A549 (cell line): ENCODE measurements at regions of chr15 and their contacts with region 1.

Region 1: GRCh38 chr15:89057504-89058133 is 30.6 kb upstream of the ABHD2 start:
- DNase-seq: peak; percentile 80 to 91
- ATAC-seq: peak; percentile 93 to 97
- H3K4me3 ChIP-seq: no peak overlapping the region
- H3K27ac ChIP-seq: peak overlapping the region; percentile 55 to 57; a peak in 5 of 6 replicates
- H3K4me1 ChIP-seq: peaks cover 6% of the 10 kb centered on the region; the same call in 1 of the 3 replicates
- CTCF ChIP-seq: peak; percentile 100
- EP300 ChIP-seq: no peak
- POLR2A ChIP-seq: no peak
- RAD21 ChIP-seq: peak; percentile 100

Region 2: DNA sequence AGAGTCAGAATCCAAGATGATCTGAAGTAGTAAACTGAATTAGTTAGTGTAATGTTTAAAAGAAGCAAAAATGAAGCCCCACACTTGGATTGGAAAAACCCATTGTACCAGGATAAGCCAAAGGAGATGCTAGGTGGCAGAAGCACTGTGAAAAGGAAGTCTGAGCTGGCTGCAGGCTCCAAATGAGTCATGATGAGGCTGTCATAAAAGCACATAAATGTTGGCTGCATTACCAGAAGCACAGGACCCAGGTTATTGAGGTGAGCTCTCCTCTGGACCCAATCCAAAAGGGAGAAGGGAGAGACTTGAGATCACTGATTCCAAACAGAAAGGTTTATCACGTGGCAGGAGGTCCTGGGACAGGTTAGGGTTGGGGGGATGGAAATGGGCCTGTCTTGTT is 257.6 kb before region 1 on chr15:
- CTCF ChIA-PET with region 1: no interaction called
- POLR2A ChIA-PET with region 1: no interaction called
- DNase-seq: peak in 1 of 2 experiments; percentile 36
- ATAC-seq: peak; percentile 34 to 45; a peak in 2 of 6 replicates
- H3K4me3 ChIP-seq: no peak overlapping the region
- H3K27ac ChIP-seq: no peak overlapping the region
- H3K4me1 ChIP-seq: peaks cover 7% of the 10 kb centered on the region; the same call in 1 of the 3 replicates
- CTCF ChIP-seq: no peak
- EP300 ChIP-seq: no peak
- POLR2A ChIP-seq: no peak
- RAD21 ChIP-seq: no peak

Region 3: DNA sequence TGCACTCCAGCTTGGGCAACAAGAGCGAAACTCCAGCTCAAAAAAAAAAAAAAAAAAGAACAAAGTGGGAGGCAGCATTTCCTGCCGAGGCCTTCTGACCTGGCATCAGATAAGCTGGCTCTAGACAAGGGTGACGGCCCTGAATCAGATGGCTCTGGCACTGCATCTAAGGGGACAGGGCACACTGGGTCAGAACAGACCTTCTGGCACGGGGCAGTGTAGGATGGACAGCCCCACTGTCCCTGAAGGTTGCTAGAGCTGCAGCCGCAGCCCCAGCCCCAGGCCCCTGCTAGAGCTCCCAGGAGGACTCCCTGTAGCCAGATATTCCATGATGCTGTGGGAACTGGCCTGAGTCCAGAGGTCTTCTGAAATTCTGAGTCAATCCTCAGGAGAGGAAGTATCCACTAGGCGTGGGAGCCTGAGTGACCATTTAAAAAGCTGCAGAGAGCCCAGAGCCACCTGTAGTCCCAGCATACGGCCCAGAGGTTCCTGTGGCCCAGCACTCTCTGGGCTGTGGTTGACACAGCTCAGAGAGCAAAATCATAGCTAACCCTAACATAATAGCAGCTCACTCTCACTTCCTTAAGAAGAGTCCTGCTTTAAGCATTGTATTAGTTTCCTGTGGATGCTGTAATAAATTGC is 75.2 kb before region 1 on chr15:
- CTCF ChIA-PET with region 1: interaction called, 11 read pairs
- POLR2A ChIA-PET with region 1: no interaction called
- DNase-seq: peak; percentile 72 to 86
- ATAC-seq: peak; percentile 78 to 89
- H3K4me3 ChIP-seq: no peak overlapping the region
- H3K27ac ChIP-seq: peak overlapping the region; percentile 87 to 89
- H3K4me1 ChIP-seq: peaks cover 57% of the 10 kb centered on the region
- CTCF ChIP-seq: no peak
- EP300 ChIP-seq: peak in 1 of 2 experiments; percentile 28; a peak in 2 of 5 replicates
- POLR2A ChIP-seq: no peak; the same call in none of the 2 replicates
- RAD21 ChIP-seq: no peak; a peak in 2 of 5 replicates

Region 4: DNA sequence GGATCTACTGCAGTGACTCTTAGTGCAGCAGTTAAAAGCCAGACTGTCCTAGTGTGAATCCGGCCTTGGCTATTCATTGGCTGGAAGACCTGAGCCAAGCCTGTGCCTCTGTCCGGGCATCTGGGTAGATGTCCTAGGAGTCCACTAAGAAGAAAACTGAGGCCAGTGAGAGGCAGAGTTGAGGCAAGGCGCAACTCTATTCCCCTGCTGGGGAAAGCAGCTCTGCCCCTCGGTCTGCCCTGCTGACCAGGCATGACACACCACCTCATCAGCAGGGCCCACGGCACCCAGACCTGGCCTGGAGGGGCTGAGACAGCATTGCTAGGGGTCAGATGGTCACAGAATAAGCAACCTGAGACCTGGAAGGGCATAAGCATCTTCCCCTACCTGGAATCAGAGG is 16.1 kb before region 1 on chr15:
- CTCF ChIA-PET with region 1: interaction called, 31 read pairs
- POLR2A ChIA-PET with region 1: no interaction called
- DNase-seq: no peak
- ATAC-seq: peak; percentile 39 to 53; a peak in 3 of 6 replicates
- H3K4me3 ChIP-seq: no peak overlapping the region
- H3K27ac ChIP-seq: no peak overlapping the region
- H3K4me1 ChIP-seq: no peaks in the 10 kb centered on the region
- CTCF ChIP-seq: no peak
- EP300 ChIP-seq: no peak
- POLR2A ChIP-seq: no peak
- RAD21 ChIP-seq: no peak

Region 5: DNA sequence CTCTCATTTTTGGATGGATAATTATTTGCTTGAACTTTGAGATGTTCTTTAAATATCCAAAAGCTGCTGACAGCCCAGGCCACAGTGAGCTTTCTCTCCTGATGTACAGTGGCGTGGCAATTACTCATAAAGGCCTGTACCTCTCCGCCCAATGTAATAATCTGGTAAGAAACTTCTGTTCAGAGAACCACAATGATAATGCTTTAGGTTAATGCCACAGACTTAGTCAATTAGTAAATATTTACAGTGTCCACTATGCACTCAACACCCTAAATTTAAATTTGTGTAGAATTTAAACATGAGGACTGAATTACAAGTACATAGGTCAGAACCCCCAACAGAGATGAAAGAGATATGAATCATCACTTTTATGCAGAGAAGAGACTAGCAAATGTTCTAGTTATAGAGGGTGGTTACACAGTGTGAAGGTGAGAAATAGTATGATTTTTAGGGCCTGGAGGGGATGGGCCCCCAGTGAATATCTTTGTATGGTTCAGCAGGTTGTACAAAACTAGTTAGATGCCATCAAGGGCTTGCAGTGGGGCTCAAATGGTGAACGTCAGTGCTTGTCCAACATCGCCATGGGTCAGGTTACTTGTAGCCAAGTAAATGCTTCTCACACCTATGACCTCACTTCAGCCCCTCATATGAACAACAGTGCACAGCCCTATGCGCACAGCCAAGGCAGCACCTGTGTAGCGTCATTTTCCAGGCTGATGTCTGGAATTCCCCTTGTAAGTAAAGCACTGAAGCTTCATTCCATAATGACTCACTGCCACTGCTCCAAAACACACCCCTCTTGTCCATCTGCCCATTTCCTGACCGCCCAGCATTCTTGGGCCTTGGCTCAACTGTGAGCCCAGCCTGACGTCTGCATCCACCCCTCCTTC is 43.9 kb after region 1 on chr15:
- CTCF ChIA-PET with region 1: interaction called, 59 read pairs
- POLR2A ChIA-PET with region 1: no interaction called
- DNase-seq: peak; percentile 97 to 98
- ATAC-seq: peak; percentile 92 to 93
- H3K4me3 ChIP-seq: no peak overlapping the region; the same call in 2 of the 3 replicates
- H3K27ac ChIP-seq: peak overlapping the region; percentile 85 to 88
- H3K4me1 ChIP-seq: peaks cover 99% of the 10 kb centered on the region
- CTCF ChIP-seq: no peak
- EP300 ChIP-seq: peak; percentile 69 to 71; a peak in 2 of 5 replicates
- POLR2A ChIP-seq: no peak
- RAD21 ChIP-seq: peak; percentile 8 to 24; a peak in 1 of 5 replicates

Region 6: DNA sequence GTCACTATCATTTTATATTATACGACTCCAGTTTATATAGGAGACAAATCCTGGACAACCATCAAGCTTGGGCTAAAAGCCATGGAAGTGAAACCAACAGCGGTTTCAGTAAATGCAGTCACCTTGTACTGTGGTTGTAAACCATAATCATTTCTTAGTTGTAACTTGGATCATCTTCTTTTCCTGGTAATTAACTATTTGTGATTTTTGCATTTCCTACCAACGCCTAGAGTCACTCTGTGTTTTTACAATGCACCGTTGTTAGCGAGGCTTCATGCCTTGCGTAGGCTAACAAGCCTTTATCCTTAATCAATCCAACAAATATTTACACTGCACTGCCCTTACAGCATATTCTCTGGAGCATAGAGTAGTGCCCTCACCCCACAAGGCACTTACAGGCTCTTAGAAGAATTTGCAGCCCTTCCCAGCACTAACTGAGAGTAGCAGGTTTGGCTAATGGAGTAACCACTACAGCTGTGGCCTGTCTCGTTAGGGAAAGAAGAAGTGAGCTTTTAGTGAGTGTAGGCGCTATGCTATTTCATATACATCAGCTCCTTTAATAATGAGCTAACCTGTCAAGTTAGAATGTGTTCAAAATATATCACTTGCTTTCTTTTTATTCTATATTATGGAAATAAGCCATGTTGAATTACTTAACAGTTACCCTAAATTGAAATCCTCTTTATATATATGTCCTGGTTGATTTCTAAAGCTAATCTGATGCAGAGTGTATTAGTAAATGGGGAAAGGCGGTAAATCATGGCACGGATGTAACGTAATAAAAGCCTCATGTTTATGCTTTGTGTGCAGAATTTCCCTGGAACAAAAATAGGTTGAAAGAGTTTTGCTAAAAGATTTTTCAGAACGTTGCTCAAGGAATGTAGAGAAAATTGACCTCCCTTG is 93.4 kb after region 1 on chr15:
- CTCF ChIA-PET with region 1: interaction called, 28 read pairs
- POLR2A ChIA-PET with region 1: no interaction called
- DNase-seq: no peak
- ATAC-seq: no peak
- H3K4me3 ChIP-seq: no peak overlapping the region
- H3K27ac ChIP-seq: no peak overlapping the region
- H3K4me1 ChIP-seq: peaks cover 7% of the 10 kb centered on the region; the same call in 2 of the 3 replicates
- CTCF ChIP-seq: no peak
- EP300 ChIP-seq: no peak
- POLR2A ChIP-seq: no peak
- RAD21 ChIP-seq: no peak

Region 7: GRCh38 chr15:89197503-89197971 is 139.9 kb after region 1 on chr15:
- CTCF ChIA-PET with region 1: interaction called, 17 read pairs
- POLR2A ChIA-PET with region 1: no interaction called
- DNase-seq: no peak
- ATAC-seq: no peak
- H3K4me3 ChIP-seq: no peak overlapping the region
- H3K27ac ChIP-seq: no peak overlapping the region
- H3K4me1 ChIP-seq: no peaks in the 10 kb centered on the region
- CTCF ChIP-seq: no peak
- EP300 ChIP-seq: no peak
- POLR2A ChIP-seq: no peak
- RAD21 ChIP-seq: no peak